ENCODE measurements at regions of chr3 and their contacts with region 1.

Region 1: GRCh38 chr3:71955240-71956068 is 170.5 kb upstream of the PROK2 start:
- DNase-seq: peak; percentile 79
- H3K4me3 ChIP-seq: no peak overlapping the region
- H3K27ac ChIP-seq: no peak overlapping the region
- H3K4me1 ChIP-seq: no peaks in the 10 kb centered on the region
- H3K27me3 ChIP-seq: no peaks in the 10 kb centered on the region
- CTCF ChIP-seq: peak; percentile 46

Region 2: DNA sequence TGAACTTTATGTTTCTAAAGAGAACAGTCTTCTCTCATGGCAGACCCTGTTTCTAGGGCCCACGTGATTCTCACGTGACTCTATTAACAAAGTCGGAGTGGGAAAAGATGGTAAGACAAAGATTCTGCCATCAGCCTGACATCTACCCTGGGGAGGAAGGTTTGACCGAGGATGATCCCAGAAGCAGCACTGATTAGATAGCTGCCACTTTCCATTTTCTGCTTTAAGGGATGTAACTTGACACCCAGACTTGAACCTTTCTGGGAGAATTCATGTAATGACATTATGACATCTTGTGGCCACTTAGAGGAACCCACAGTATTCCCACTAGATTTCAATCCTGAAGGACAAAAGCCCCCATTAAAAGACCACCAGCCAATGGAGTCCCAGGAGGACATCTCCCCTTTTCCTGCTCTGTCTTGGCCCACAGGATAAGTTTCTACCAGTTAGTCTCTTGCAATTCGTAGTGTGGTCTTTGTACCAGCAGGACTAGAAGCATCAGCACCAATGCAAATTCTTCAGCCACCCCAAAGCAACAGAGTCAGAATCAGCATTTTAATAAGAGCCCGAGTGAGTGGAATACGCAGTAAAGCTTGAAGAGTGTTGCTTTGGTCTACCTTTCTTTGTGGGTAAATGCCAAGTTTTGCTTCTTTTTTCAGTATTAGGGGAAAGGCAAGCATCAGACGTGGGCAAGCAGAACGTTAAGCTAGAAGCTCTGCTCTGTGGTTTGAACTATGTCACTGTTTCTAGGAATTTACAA is 310.0 kb after region 1 on chr3:
- intact Hi-C with region 1: loop called (anchors 10 kb)
- DNase-seq: no peak
- H3K4me3 ChIP-seq: no peak overlapping the region
- H3K27ac ChIP-seq: no peak overlapping the region
- H3K4me1 ChIP-seq: no peaks in the 10 kb centered on the region
- H3K27me3 ChIP-seq: no peaks in the 10 kb centered on the region
- CTCF ChIP-seq: peak; percentile 26

Region 3: GRCh38 chr3:72288955-72289691 is 333.7 kb after region 1 on chr3:
- intact Hi-C with region 1: no loop called
- DNase-seq: no peak
- H3K4me3 ChIP-seq: no peak overlapping the region
- H3K27ac ChIP-seq: no peak overlapping the region
- H3K4me1 ChIP-seq: no peaks in the 10 kb centered on the region
- H3K27me3 ChIP-seq: no peaks in the 10 kb centered on the region
- CTCF ChIP-seq: no peak

Region 4: DNA sequence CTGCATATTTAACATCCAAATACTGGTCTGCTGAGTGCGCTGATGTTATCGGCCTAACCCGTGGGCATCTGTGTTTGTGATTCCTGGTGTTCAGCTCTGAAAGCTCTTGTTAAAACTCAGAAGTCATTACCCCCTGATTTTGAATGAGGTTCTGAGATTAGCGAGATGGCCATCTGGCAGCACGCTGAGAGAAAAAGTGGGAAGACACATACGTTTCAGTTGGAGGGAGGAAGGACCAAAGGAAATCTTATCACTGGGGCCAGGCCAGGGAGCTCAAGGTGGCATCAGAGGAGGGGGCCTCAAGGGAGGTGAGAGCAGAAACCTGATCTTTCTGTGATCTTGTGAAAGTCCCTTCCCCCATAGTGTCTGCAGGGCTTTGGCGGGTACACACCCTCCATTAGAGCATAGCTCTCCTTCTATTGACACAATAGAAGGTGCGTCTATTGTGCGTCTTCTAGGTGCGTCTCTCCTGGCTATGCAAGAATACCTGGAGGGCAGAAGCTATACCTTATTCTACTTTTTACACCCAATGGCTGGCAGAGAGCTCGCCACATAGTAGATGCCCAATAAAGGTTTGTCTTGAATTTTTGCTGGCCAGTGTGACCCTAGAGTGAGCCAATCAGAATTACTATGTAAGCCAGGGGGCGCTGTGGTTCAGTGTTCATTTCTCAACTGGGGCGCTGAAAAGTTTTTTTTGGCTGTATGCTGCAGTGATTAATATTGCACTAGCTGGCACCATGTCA is 710.4 kb after region 1 on chr3:
- intact Hi-C with region 1: loop called (anchors 10 kb)
- DNase-seq: peak; percentile 75
- H3K4me3 ChIP-seq: no peak overlapping the region
- H3K27ac ChIP-seq: no peak overlapping the region
- H3K4me1 ChIP-seq: no peaks in the 10 kb centered on the region
- H3K27me3 ChIP-seq: no peaks in the 10 kb centered on the region
- CTCF ChIP-seq: peak; percentile 51

Measured in colonic mucosa (tissue), 4 donors.